ENCODE measurements at regions of chr9 and their contacts with region 1.

Region 1: GRCh38 chr9:86637515-86637914 is 283.3 kb upstream of the TUT7 start:
- DNase-seq: no peak
- H3K4me3 ChIP-seq: no peak overlapping the region
- CTCF ChIP-seq: peak; percentile 83

Region 2: DNA sequence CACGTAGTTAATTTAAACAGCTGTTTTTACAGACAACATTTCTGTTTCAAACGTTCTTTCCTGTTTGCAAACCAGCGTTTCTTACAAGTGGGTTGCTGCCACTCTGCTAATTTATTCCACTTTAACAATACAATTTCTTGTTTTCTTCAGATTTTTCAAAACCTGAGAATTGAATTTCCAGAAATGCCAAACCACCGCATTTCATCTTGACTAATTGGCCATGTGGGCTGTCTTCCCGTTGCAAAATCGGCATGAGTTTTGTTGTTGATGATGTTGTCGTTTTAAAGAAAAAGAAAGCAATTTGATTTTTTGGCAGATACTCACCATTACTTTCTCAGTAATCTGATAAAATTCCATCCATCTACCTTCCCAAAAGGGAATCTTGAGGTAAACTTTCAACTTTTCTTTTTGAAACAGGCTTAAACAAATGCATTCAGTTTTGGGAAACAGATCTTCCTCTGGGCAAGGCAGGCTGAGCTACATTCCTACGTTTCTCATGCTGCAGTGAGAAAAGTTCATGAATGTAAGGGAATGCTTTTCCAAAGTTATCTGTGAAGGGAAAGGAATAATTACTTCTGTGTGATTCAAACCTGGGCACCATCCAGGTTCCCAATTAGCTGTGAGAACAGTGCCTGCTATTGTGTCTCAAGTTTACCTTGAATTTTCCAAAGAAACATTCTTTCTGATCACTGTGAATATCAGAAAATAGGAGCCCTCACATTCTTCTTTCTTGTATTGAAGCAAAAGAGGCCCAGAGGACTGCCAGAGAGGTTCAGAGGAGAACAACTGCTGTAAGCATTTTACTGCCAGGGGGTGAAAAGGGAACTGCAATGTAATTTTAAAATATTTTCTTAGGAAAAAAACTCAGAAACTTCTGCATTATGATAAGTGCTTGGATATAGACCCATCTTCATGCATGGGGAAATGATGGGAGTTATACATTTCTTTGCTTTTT is 182.6 kb before region 1 on chr9:
- CTCF ChIA-PET with region 1: no interaction called
- POLR2A ChIA-PET with region 1: no interaction called
- DNase-seq: no peak
- H3K4me3 ChIP-seq: no peak overlapping the region
- CTCF ChIP-seq: no peak

Region 3: GRCh38 chr9:86614871-86615849 is 22.4 kb before region 1 on chr9:
- CTCF ChIA-PET with region 1: interaction called, 17 read pairs
- POLR2A ChIA-PET with region 1: no interaction called
- DNase-seq: peak; percentile 31
- H3K4me3 ChIP-seq: no peak overlapping the region
- CTCF ChIP-seq: peak; percentile 27

Region 4: DNA sequence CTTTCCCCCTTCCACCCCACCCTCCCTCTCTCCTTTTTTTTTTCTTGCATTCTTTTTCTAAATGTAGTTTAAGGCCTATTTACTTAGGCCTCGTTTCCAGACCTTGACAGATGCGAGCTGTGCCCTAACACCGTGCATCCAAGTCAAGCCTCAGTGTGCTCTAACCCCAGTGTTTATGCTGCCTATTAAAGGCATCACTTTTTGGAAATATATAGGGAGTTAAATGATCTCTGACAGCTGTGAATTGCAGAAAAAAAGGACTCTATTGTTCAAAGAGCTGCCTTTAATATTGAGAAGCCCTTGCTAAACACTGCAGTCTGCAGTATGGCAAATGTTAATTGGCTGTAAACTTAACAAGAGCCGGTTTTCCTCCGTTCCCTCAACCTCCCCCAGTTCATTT is 12.9 kb before region 1 on chr9:
- CTCF ChIA-PET with region 1: interaction called, 10 read pairs
- POLR2A ChIA-PET with region 1: interaction called, 3 read pairs
- DNase-seq: no peak
- H3K4me3 ChIP-seq: no peak overlapping the region
- CTCF ChIP-seq: no peak

Region 5: GRCh38 chr9:86662890-86663468 is 25.5 kb after region 1 on chr9:
- CTCF ChIA-PET with region 1: interaction called, 10 read pairs
- POLR2A ChIA-PET with region 1: no interaction called
- DNase-seq: no peak
- H3K4me3 ChIP-seq: no peak overlapping the region
- CTCF ChIP-seq: no peak

Measured in AG04449 (cell line).